ENCODE measurements at regions of chr19 and their contacts with region 1.

Region 1: GRCh38 chr19:39277612-39278011 is 9.4 kb downstream of the IFNL2 start:
- DNase-seq: peak; percentile 89 to 91
- H3K4me3 ChIP-seq: no peak overlapping the region
- H3K4me3 Mint-ChIP-seq: peak overlapping the region; percentile 66
- H3K27ac Mint-ChIP-seq: peak overlapping the region; percentile 95
- H3K4me1 ChIP-seq: peaks cover 18% of the 10 kb centered on the region
- H3K4me1 Mint-ChIP-seq: peaks cover 10% of the 10 kb centered on the region
- H3K27me3 ChIP-seq: no peaks in the 10 kb centered on the region
- H3K27me3 Mint-ChIP-seq: no peaks in the 10 kb centered on the region
- CTCF ChIP-seq: no peak

Region 2: GRCh38 chr19:38387550-38388348 is 889.9 kb before region 1 on chr19 and contains the start of gene GGN:
- CTCF ChIA-PET with region 1: no interaction called
- POLR2A ChIA-PET with region 1: interaction called, 11 read pairs
- intact Hi-C with region 1: no loop called
- DNase-seq: peak; percentile 91 to 94
- H3K4me3 ChIP-seq: peak within 1 kb of the TSS; percentile 60
- H3K4me3 Mint-ChIP-seq: peak within 1 kb of the TSS; percentile 83
- H3K27ac Mint-ChIP-seq: peak within 1 kb of the TSS; percentile 43
- H3K4me1 ChIP-seq: peaks cover 25% of the 10 kb centered on the region
- H3K4me1 Mint-ChIP-seq: peaks cover 18% of the 10 kb centered on the region
- H3K27me3 ChIP-seq: no peaks in the 10 kb centered on the region
- H3K27me3 Mint-ChIP-seq: no peaks in the 10 kb centered on the region
- CTCF ChIP-seq: no peak
- total RNA-seq, gene GGN: 0.79 TPM in 1 of 2 replicates, not detected in the other

Region 3: DNA sequence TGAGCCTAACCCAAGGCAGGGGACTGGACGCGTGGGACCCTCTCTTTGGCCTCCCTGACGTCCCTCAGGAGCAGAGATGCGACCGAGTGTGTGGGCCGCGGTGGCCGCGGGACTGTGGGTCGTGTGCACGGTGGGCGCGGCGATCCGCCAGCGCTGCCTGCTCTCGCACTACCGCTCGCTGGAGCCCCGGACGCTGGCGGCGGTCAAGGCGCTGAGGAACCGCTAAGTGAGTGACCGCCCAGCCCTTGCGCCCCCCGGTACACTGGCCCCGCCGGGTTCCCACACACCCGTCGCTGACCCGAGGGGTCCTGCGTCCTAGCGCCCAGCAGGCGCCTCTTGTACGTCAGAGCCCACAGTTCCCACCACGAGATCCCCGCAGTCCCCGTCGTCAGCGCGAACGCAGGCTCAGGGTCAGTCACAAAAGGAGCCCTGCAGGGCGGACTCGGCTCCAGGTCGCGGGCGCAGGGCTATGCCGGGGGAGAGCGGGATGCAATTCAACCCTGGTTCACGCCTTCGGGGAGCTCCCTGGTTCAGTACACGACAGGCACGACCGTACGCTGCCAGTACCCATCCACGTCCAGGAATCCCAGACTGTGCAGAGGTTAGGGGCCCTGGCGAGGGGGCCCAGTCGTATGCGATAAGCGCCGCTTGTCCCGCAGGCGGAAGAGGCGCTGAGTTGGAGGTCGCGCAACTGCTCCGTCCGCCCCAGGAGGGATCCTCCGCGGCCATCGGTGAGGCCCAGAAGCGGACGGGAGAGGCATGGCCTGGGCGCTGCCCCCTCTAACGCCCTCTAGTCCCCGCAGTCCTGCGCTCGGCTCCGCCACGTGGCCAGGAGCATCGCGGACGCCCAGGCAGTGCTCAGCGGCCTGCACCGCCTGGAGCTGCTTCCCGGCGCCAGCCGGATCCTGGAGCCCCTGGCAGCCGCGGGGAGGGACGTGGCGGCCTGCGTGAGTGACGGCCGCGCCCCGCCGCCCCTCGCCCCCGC is 13.0 kb before region 1 on chr19:
- CTCF ChIA-PET with region 1: no interaction called
- POLR2A ChIA-PET with region 1: no interaction called
- intact Hi-C with region 1: loop called (anchors 2 kb)
- DNase-seq: no peak
- H3K4me3 ChIP-seq: no peak overlapping the region
- H3K4me3 Mint-ChIP-seq: no peak overlapping the region
- H3K27ac Mint-ChIP-seq: no peak overlapping the region
- H3K4me1 ChIP-seq: peaks cover 40% of the 10 kb centered on the region
- H3K4me1 Mint-ChIP-seq: peaks cover 20% of the 10 kb centered on the region
- H3K27me3 ChIP-seq: no peaks in the 10 kb centered on the region
- H3K27me3 Mint-ChIP-seq: no peaks in the 10 kb centered on the region
- CTCF ChIP-seq: no peak

Region 4: DNA sequence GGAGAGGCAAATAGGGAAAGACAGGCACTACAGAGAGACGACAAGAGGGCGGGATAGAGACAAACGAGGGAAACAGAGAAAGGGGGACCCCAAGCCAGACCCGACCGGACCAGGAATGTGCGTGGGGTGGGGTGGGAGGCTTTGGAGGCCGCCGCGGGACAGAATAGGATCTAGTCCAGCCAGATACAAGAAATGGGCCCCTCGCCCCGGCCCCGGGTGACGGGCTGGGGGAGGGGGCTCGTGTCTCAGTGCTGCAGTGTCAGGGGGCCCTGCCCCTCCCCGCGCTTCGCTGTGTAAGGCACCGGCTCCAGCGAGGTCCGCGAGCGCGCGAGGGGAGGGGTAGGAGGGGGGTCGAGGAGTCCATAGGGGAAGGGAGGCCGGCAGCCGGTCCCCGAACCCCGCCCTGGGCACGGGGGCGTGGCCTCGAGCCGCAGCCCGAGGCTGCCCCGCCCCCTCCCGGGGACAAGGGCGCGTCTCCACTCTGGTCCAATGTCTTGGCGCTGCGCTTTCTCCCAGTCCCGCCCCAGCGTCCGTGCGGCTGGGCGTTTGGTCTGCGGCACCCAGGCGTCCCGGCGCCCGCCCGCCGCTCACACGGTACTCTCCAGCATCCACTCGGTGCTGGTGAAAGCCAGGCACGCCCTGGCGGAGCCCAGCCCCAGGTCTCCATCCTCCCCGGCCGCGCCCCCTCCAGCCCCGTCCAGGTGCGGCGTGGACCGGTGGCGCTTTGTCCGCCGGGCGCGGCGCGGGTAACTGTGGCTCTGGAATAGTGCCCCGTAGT is 29.6 kb after region 1 on chr19:
- CTCF ChIA-PET with region 1: interaction called, 6 read pairs
- POLR2A ChIA-PET with region 1: interaction called, 13 read pairs
- intact Hi-C with region 1: loop called (anchors 1 kb)
- DNase-seq: peak; percentile 89 to 91
- H3K4me3 ChIP-seq: peak overlapping the region; percentile 65
- H3K4me3 Mint-ChIP-seq: peak overlapping the region; percentile 86
- H3K27ac Mint-ChIP-seq: peak overlapping the region; percentile 91
- H3K4me1 ChIP-seq: peaks cover 59% of the 10 kb centered on the region
- H3K4me1 Mint-ChIP-seq: peaks cover 60% of the 10 kb centered on the region
- H3K27me3 ChIP-seq: no peaks in the 10 kb centered on the region
- H3K27me3 Mint-ChIP-seq: no peaks in the 10 kb centered on the region
- CTCF ChIP-seq: no peak

Measured in Caco-2 (cell line).